Adrenal gland (tissue), 19 donors: ENCODE measurements at regions of chr12 and their contacts with region 1.

Region 1: DNA sequence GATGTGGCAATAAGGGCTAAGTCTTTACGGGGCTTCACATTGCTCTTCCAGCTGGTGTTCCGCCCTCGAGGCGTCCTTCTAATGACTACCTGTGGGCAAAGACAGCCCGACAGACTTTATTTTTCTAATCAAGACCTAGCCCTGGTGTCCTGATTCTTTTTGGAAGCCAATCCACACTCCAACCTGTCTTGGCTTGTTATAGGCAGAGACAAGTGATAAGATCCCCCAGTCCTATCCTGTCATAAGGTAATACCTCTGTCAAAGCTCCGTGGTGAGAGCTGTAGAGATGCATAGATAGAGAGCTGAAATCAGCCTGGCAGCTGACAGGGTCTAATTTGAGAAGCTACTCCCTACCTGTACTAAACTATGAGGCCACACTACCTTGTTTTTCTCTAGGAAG is 11.5 kb upstream of the WNK1 start:
- DNase-seq: no peak
- H3K4me3 ChIP-seq: no peak overlapping the region
- H3K27ac ChIP-seq: no peak overlapping the region
- H3K4me1 ChIP-seq: no peaks in the 10 kb centered on the region
- H3K27me3 ChIP-seq: no peaks in the 10 kb centered on the region
- CTCF ChIP-seq: no peak
- POLR2A ChIP-seq: no peak

Region 2: DNA sequence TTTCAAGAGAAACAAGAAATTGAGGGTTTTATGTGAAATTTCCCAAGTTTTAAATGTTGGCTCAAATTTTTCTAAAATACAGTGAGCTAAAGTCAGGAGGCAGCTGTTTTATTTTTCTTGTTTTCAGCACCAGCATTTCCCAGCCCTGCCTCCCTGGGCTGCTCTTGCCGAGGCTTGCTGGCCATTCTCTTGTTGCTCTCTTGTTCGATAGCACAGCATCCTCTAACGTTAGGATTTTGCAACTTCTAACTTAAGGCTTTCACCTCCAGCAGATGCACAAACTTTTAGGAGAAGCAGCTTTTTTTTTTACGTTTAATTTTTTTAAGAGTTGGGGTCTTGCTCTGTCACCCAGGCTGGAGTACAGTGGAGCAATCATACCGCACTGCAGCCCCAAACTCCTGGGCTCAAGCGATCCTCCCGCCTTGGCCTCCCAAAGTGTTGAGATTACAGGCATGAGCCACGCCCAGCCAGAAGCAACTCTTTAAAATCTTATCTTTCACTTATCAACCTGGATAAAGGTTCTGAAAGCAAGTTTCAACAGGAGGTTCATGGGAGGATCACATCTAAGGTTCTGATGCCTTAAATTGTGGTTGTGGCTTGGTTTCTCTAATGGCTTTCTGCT is 240.9 kb before region 1 on chr12:
- intact Hi-C with region 1: no loop called
- DNase-seq: no peak
- H3K4me3 ChIP-seq: no peak overlapping the region
- H3K27ac ChIP-seq: no peak overlapping the region
- H3K4me1 ChIP-seq: no peaks in the 10 kb centered on the region
- H3K27me3 ChIP-seq: no peaks in the 10 kb centered on the region
- CTCF ChIP-seq: no peak
- POLR2A ChIP-seq: no peak

Region 3: GRCh38 chr12:585062-586061 is 155.5 kb before region 1 on chr12:
- intact Hi-C with region 1: loop called in 1 of 2 experiments (anchors 5 kb)
- DNase-seq: no peak
- H3K4me3 ChIP-seq: no peak overlapping the region
- H3K27ac ChIP-seq: no peak overlapping the region
- H3K4me1 ChIP-seq: no peaks in the 10 kb centered on the region
- H3K27me3 ChIP-seq: no peaks in the 10 kb centered on the region
- CTCF ChIP-seq: no peak
- POLR2A ChIP-seq: no peak

Region 4: GRCh38 chr12:920676-921075 is 179.8 kb after region 1 on chr12:
- intact Hi-C with region 1: no loop called
- DNase-seq: no peak
- H3K4me3 ChIP-seq: no peak overlapping the region
- H3K27ac ChIP-seq: no peak overlapping the region
- H3K4me1 ChIP-seq: no peaks in the 10 kb centered on the region
- H3K27me3 ChIP-seq: no peaks in the 10 kb centered on the region
- CTCF ChIP-seq: no peak
- POLR2A ChIP-seq: no peak

Region 5: DNA sequence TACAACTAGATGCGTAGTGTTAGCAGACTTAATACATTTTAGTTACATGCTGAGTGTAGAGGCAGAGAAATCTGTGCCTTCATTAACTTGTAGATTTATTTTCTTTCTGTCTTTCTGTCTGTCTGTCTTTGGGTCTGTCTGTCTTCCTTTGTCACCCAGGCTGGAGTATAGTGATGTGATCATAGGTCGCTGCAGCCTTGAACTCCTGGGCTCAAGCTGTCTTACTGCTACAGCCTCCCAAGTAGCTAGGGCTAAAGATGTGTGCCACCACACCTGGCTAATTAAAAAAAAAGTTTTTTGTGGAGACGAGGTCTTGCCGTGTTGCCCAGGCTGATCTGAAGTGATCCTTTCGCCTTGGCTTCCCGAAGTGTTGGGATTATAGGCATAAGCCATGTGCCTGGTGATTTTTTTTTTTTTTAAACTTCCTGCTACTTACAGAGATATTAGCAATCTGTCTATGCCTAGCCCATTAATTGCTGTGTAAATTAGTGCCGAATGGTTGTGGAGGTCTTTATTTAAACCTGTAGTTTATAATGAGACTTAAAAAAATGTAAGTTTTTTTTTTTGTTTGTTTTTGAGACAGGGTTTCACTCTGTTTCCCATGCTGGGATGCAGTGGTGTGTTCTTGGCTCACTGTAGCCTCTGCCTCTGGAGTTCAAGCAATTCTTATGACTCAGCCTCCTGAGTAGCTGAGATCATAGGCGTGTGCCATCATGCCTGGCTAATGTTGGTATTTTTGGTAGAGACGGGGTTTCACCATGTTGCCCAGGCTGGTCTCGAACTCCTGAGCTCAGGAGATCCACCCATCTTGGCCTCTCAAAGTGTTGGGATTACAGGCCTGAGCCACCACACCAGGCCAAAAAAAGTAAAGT is 273.0 kb after region 1 on chr12:
- intact Hi-C with region 1: no loop called
- DNase-seq: peak in 6 of 7 donors; percentile 43 to 68 (median 62)
- H3K4me3 ChIP-seq: no peak overlapping the region
- H3K27ac ChIP-seq: peak overlapping the region; percentile 6 to 80 (median 48)
- H3K4me1 ChIP-seq: peaks cover 14 to 21% of the 10 kb centered on the region in 2 donors
- H3K27me3 ChIP-seq: no peaks in the 10 kb centered on the region
- CTCF ChIP-seq: no peak
- POLR2A ChIP-seq: no peak